Activated CD4-positive, alpha-beta memory T cell treated with anti-CD3 and anti-CD28 coated beads, Interleukin-2, amount 10 ng/mL, durations not matched to agents 7 days and 5 days (primary cell): ENCODE measurements at regions of chr11 and their contacts with region 1.

Region 1: DNA sequence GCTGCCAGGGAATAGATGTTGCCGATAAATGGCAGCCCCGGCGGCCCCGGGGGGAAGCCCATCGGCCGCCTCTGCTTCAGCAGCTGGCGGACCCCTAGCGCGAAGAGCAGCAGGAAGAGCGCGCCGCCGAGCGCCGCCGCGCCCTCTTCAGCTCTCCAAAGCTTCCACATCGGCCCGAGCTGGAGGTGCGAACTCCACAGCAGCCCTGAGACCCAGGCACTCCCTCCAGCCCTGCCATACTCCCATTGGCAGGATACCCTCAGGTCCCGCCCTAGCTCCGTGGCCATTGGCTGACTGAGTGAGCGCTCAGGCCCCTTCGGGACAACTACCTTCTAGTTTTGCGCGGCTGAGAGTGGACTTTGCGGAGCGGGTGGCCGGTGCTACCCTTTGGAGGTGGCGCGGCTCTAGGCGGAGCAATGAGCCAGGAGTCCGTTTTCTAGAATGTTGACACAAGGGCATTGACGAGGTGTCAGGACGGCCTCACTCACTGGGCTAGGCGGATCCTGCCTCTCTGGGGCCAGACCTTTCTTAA is at the start of gene CYP2R1:
- DNase-seq: peak; percentile 94
- H3K4me3 Mint-ChIP-seq: peak within 1 kb of the TSS; percentile 90
- H3K27ac Mint-ChIP-seq: peak within 1 kb of the TSS; percentile 95
- H3K4me1 Mint-ChIP-seq: peaks cover 57% of the 10 kb centered on the region
- H3K27me3 Mint-ChIP-seq: no peaks in the 10 kb centered on the region
- total RNA-seq, gene CYP2R1: 22.2 TPM

Region 2: DNA sequence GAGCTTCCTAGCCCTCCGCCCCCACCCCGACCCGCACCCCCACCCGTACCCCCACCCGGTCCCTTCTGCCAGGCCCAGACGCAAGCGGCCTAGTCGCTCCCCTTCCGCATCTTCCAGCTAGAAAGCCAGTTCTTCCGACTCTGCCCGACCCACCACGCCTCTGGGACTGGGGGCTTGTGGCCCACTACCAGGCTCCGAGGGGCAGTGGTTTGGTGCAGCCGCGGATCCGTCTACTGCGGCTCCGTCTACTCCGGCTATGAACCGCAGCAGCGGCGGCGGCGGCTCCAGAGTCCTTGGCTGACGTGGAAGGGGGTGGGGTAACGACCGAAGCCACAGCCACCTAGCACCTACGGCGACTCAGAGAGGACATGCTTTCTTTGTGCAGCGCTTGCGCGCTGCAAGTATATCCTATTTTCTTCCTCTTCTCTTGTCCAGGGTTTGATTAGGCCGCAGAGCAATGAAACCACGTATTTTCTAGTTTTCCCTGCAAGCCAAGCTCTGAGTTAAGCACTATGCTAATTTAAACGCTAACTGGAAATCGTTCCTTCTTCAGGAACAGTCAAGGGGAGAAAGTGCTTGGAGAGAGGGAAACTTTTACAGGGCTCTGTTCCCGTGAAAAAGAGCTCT is 392.4 kb before region 1 on chr11 and contains the start of gene COPB1:
- CTCF ChIA-PET with region 1: interaction called, 6 read pairs
- POLR2A ChIA-PET with region 1: interaction called, 22 read pairs
- DNase-seq: peak; percentile 96
- H3K4me3 Mint-ChIP-seq: peak within 1 kb of the TSS; percentile 98
- H3K27ac Mint-ChIP-seq: peak within 1 kb of the TSS; percentile 91
- H3K4me1 Mint-ChIP-seq: peaks cover 45% of the 10 kb centered on the region
- H3K27me3 Mint-ChIP-seq: no peaks in the 10 kb centered on the region
- total RNA-seq, gene COPB1: 98.0 to 100.0 TPM

Region 3: GRCh38 chr11:15507592-15507991 is 615.5 kb after region 1 on chr11:
- CTCF ChIA-PET with region 1: no interaction called
- POLR2A ChIA-PET with region 1: no interaction called
- DNase-seq: no peak
- H3K4me3 Mint-ChIP-seq: no peak overlapping the region
- H3K27ac Mint-ChIP-seq: no peak overlapping the region
- H3K4me1 Mint-ChIP-seq: no peaks in the 10 kb centered on the region
- H3K27me3 Mint-ChIP-seq: no peaks in the 10 kb centered on the region